Right ventricle myocardium inferior (tissue), 1 donor: ENCODE measurements at regions of chr16 and their contacts with region 1.

Region 1: DNA sequence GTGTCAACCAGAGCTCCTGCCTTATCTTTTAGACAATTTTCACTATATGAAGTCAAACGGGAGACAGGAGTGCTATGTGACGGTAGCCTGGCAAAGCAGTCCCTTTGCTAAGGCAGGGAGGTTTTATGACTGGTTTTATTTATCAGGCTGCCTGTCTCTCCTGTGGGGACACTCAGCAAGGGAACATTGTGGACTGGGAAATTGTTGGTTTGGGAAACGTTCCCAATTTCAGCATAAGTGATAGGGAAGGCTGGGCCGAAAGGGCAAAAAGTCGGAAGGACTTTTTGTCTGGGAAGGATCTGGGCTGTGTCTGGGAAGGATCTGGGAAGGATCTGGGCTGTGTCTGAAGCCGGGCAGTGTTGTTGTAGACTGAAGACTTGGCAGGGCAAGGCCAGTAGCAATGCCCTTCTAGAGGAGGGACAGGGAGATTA is 211.2 kb downstream of the PARN start:
- DNase-seq: no peak
- ATAC-seq: peak; percentile 88

Region 2: GRCh38 chr16:14300705-14301168 is 118.1 kb before region 1 on chr16:
- intact Hi-C with region 1: loop called (anchors 2 kb)
- DNase-seq: peak; percentile 79
- ATAC-seq: peak; percentile 82

Region 3: DNA sequence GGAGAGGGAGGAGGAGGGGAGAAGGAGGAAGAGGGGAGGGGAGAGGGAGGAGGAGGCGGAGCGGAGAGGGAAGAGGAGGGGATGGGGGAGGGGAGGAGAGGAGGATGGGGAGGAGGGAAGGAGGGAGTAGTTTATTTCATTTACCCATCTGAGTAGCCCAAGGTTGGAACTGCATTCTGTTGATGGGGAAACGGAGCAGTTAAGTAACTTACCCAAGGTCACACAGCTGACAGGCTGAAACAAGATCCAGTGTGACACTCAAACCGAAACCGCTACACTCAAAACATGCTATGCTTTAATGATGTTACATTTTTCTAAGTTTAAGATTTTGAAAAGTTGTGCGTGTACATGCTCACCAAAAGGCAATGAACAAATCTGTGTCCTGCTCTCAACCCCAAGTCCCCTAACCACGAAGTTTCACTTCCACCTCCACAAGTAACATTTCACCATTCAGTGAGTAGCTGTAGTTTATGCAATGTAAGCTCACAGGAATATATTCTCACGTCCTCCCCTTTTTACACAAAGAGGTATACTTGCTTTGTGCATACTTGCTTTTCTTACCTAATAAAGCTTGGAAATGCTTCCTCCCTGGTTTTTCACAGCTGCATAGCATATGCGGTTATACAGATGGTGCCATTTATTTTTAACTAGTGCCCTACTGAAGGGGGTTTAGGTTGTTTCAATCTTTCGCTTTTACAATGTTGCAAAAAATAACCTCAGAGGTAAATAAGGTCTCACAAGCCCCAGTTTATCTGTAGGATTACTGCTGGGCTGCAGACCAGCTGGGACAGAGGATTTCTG is 64.1 kb before region 1 on chr16:
- intact Hi-C with region 1: no loop called
- DNase-seq: no peak
- ATAC-seq: peak; percentile 33

Region 4: GRCh38 chr16:14510939-14511799 is 92.4 kb after region 1 on chr16:
- intact Hi-C with region 1: no loop called
- DNase-seq: no peak
- ATAC-seq: peak; percentile 44